A673 (cell line): ENCODE measurements at regions of chr19 and their contacts with region 1.

Region 1: GRCh38 chr19:36850559-36851442 is at the start of gene ZNF345:
- DNase-seq: peak; percentile 95
- H3K4me3 ChIP-seq: peak within 1 kb of the TSS; percentile 65
- H3K27ac ChIP-seq: peak within 1 kb of the TSS; percentile 71
- H3K4me1 ChIP-seq: no peaks in the 10 kb centered on the region
- H3K27me3 ChIP-seq: no peaks in the 10 kb centered on the region
- CTCF ChIP-seq: no peak
- total RNA-seq, gene ZNF345: 2.8 and 4.1 TPM in 2 replicates

Region 2: GRCh38 chr19:36797786-36798108 is 53.1 kb before region 1 on chr19:
- CTCF ChIA-PET with region 1: no interaction called
- POLR2A ChIA-PET with region 1: no interaction called
- intact Hi-C with region 1: loop called (anchors 1 kb)
- DNase-seq: no peak
- H3K4me3 ChIP-seq: peak overlapping the region; percentile 59
- H3K27ac ChIP-seq: no peak overlapping the region
- H3K4me1 ChIP-seq: no peaks in the 10 kb centered on the region
- H3K27me3 ChIP-seq: no peaks in the 10 kb centered on the region
- CTCF ChIP-seq: no peak

Region 3: DNA sequence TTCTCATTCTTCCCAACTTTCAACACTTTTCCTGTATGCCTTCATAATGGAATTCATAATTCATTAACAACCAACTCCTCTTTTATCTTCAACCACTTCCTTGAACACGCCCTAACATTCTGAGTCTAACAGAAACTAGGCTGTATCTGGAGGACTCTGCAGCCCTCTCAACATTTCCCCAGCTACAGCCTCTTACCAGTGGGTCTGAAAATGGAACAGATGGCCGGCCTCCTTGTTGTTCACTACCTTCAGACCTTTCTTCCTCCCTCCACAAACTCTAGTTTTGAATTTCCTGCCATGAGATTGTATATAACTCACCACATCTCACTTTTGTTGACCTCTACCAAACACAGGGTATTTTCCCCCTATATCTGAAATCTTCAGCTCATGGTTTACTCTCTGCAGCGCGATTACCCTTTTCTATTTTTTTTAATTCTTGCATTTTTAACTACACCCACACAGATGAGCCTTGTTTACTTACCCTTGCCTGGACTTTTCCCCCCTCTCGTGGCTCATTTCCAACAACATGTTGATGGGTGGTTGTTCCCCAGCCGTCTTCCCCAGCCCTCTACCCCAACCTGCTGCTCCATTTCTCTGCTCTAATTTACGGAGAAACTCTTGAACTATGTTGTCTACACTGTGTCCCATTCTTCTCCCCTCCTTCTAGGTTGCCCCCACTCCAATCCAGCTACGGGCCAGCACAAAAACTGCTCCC is 13.5 kb before region 1 on chr19:
- CTCF ChIA-PET with region 1: no interaction called
- POLR2A ChIA-PET with region 1: no interaction called
- intact Hi-C with region 1: no loop called
- DNase-seq: no peak
- H3K4me3 ChIP-seq: peak overlapping the region; percentile 63
- H3K27ac ChIP-seq: peak overlapping the region; percentile 70
- H3K4me1 ChIP-seq: no peaks in the 10 kb centered on the region
- H3K27me3 ChIP-seq: no peaks in the 10 kb centered on the region
- CTCF ChIP-seq: no peak

Region 4: GRCh38 chr19:36973021-36973843 is 122.4 kb after region 1 on chr19:
- CTCF ChIA-PET with region 1: no interaction called
- POLR2A ChIA-PET with region 1: no interaction called
- intact Hi-C with region 1: no loop called
- DNase-seq: peak; percentile 43
- H3K4me3 ChIP-seq: peak overlapping the region; percentile 47
- H3K27ac ChIP-seq: no peak overlapping the region
- H3K4me1 ChIP-seq: no peaks in the 10 kb centered on the region
- H3K27me3 ChIP-seq: no peaks in the 10 kb centered on the region
- CTCF ChIP-seq: peak; percentile 53